Gastrocnemius medialis (tissue), 4 donors: ENCODE measurements at regions of chr1 and their contacts with region 1.

Region 1: DNA sequence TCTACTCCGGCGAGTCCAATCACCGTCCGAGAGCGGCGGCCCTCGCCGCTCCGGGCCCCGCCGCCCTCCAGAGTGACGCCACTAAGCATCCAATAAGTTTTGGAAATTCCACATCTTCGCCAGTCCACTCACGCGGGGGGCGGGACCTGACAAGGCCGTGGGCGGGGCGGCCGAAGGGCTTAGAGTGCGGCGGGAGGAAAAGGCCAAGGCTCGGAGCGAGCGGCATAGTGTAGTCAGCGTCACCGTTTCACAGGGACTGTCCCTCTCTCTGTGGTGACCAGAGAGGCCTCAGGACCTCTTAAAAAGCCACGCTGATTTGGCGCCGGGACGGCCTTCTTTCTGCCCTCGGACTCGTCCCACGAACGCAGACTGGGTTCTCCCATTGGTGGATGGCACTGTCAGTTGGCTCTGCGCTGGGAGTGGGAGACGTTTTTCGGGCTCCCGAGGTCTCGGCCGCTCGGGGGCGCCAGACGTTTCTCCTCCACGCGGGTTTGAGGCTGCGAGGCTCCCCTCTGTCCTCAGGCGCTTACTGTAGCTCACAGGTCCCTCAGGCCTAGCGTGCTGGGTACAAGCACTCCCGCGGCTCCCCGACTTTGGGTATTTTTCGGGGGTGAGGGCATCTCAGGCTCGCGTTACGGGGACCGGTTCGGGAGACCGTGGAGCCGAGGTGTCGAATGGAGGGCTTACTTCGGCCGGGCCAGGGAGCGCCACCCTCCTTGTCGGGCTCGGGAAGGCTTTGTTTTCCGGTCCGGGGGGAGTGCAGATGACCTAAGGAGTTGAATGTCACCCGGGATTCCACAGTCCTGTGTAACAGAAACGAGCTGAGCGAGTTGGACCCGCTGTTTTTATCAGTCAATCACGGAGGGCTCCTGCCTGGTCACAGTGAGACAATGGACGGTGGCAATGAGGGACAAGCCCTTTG is 488 bp upstream of the TRIM45 start:
- DNase-seq: peak; percentile 93 to 97
- ATAC-seq: peak; percentile 84 to 90
- H3K4me3 ChIP-seq: peak overlapping the region; percentile 60 to 85 (median 80)
- H3K27ac ChIP-seq: peak overlapping the region; percentile 87 to 97 (median 92)
- H3K4me1 ChIP-seq: peaks cover 54 to 61% of the 10 kb centered on the region in 2 donors
- H3K27me3 ChIP-seq: no peaks in the 10 kb centered on the region
- CTCF ChIP-seq: peak; percentile 59 to 82 (median 66)
- POLR2A ChIP-seq: peak; percentile 62 to 66

Region 2: DNA sequence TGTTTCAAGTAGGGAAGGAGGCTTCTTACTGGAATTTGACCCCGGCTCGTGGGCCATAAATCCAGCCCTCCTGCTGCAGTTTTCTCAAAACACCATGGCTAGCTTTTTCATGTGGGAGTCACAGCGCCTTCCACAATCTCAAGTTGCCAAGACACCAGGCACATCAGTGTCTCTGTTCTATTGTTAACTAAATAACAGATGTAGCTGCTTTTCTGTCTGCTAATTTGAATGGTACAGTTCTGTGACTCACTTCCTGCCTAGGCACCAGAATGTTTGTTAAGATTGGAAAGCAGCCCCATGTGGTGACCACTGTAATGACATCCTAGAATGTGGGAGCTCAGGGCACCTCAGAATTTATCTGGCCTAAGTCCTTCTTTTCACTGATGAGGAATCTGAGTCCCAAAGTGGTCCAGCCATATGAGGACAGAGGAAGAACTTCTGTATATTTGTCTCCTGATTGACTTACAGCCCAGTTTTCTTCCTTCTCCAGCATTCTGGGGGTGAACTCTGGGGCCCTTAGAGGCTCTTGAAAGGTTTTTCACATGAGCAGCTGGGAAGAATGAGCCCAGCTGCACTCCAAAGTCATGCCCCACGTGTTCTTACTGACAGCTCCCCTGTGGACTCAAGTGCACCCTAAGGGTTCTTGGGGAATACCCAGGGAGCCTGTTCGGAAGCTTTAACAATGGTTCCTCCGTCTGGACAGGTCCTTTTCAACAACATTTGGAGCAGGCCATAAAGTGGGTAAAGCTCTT is 28.0 kb before region 1 on chr1:
- in situ Hi-C with region 1: no loop called
- intact Hi-C with region 1: loop called (anchors 2 kb)
- DNase-seq: no peak
- ATAC-seq: peak in 1 of 2 donors; percentile 37
- H3K4me3 ChIP-seq: no peak overlapping the region
- H3K27ac ChIP-seq: peak overlapping the region; percentile 93 to 96 (median 94)
- H3K4me1 ChIP-seq: peaks cover 27 to 56% of the 10 kb centered on the region in 2 donors
- H3K27me3 ChIP-seq: no peaks in the 10 kb centered on the region
- CTCF ChIP-seq: peak in 3 of 5 experiments; percentile 13 to 32 (median 26)
- POLR2A ChIP-seq: no peak

Region 3: GRCh38 chr1:117284399-117285215 is 162.6 kb after region 1 on chr1:
- in situ Hi-C with region 1: no loop called
- intact Hi-C with region 1: loop called (anchors 5 kb)
- DNase-seq: no peak
- ATAC-seq: peak; percentile 52 to 75
- H3K4me3 ChIP-seq: no peak overlapping the region
- H3K27ac ChIP-seq: no peak overlapping the region
- H3K4me1 ChIP-seq: no peaks in the 10 kb centered on the region
- H3K27me3 ChIP-seq: no peaks in the 10 kb centered on the region
- CTCF ChIP-seq: peak; percentile 27 to 43 (median 33)
- POLR2A ChIP-seq: no peak